ENCODE measurements at regions of chr7 and their contacts with region 1.

Region 1: GRCh38 chr7:77351539-77352004 is 64.6 kb downstream of the GSAP start:
- DNase-seq: peak; percentile 88
- H3K4me3 Mint-ChIP-seq: peak overlapping the region; percentile 76
- H3K27ac Mint-ChIP-seq: peak overlapping the region; percentile 94
- H3K4me1 Mint-ChIP-seq: peaks cover 54% of the 10 kb centered on the region
- H3K27me3 Mint-ChIP-seq: peaks cover 4% of the 10 kb centered on the region

Region 2: GRCh38 chr7:77315182-77315591 is 36.4 kb before region 1 on chr7:
- intact Hi-C with region 1: no loop called
- DNase-seq: no peak
- H3K4me3 Mint-ChIP-seq: no peak overlapping the region
- H3K27ac Mint-ChIP-seq: no peak overlapping the region
- H3K4me1 Mint-ChIP-seq: no peaks in the 10 kb centered on the region
- H3K27me3 Mint-ChIP-seq: no peaks in the 10 kb centered on the region

Region 3: DNA sequence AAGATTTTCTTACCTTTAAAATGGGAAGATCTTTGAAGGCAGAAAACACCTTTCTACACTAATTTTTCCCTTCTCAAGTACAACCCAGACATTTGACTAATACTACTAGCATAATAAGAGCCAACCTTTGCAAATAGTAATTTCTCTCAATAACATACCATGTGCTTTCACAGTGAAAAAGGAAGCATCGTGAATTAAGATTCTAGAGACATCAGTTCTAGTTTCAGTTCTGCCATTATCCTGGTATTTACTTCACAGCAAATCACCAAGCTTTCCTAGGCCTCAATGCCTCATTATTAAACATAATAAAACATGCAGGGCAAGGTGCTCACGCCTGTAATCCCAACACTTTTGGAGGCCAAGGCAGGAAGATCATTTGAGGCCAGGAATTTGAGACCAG is 39.7 kb after region 1 on chr7:
- intact Hi-C with region 1: no loop called
- DNase-seq: no peak
- H3K4me3 Mint-ChIP-seq: no peak overlapping the region
- H3K27ac Mint-ChIP-seq: no peak overlapping the region
- H3K4me1 Mint-ChIP-seq: peaks cover 24% of the 10 kb centered on the region
- H3K27me3 Mint-ChIP-seq: no peaks in the 10 kb centered on the region

Region 4: DNA sequence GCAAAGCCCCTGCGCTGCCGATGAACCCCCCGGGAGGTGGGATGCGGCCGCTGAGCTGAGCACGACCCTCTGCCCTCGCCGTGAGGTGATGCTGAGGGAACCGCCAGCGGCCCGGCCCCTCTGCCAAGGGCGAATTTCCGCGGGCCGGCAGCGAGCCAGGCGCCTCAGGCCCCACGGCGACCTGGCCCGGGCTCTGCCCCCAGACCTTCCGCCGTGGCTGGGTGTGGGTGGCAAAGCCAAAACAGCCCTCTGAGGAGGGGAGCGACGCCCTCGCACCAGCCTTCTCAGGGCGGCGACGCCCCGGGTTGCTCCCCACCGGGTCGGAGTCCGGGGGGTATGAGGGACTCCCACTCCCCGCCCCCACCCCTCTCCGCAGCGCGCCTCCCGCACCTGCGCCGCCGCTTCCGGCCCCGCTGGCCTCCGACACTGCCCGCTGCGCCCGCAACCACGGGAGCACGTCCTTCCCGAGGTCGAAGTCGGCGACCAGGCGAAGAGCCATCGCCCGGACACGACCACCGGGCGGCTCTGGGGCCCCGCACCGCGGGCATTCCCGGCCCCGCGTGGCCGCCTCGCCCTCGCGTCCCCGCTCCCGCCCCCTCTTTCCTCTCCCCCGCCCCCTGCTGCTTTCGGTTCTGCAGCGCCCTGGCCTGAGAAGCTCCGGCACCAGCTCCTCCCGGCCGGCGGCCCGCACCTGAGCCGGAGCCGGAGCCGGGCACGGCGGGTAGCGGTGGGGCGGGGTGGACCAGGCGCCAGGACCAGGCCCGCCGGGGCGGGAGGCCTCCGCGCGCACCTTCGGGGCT is 64.5 kb after region 1 on chr7 and contains the start of gene GSAP:
- intact Hi-C with region 1: loop called (anchors 5 kb)
- DNase-seq: peak; percentile 86
- H3K4me3 Mint-ChIP-seq: peak within 1 kb of the TSS; percentile 66
- H3K27ac Mint-ChIP-seq: peak within 1 kb of the TSS; percentile 36
- H3K4me1 Mint-ChIP-seq: peaks cover 23% of the 10 kb centered on the region
- H3K27me3 Mint-ChIP-seq: peaks cover 6% of the 10 kb centered on the region
- total RNA-seq, gene GSAP: 2.1 and 2.8 TPM in 2 replicates

Region 5: DNA sequence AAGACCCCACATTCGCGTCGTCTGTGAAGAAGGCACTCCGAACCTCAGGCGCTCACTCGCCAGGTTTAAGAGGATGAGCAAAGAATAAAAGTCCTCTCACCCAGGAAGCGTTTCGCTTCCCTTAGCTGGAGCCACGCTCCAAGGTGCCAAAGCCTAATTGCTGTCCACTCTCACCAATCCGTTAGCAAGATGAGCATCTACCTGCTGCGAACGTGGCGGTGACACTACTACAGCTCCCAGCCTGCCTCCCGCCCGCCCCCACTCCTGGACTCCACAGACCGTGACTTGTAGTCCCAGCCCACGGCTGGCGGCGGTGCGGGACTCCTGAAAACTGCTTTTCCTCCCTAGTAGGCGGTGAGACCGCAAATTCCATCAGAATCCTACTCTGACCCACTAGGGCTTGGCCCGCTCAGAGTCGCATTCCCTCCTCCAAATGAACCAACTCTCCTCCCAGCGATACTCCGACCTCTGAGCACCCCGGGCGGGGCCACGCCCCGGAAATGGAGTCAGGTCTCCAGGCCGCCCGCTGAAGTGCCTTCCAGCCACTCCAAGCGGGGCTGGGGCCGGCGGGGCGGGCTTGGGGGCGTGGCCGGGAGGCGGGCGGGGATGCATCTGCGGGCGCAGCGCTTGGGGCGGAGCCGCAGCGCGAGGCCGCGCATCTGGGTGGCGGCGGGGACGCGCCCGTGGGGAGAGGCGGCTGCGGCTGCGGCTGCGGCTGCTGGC is 185.0 kb after region 1 on chr7:
- intact Hi-C with region 1: loop called (anchors 2 kb)
- DNase-seq: peak; percentile 98
- H3K4me3 Mint-ChIP-seq: peak overlapping the region; percentile 98
- H3K27ac Mint-ChIP-seq: peak overlapping the region; percentile 94
- H3K4me1 Mint-ChIP-seq: peaks cover 12% of the 10 kb centered on the region
- H3K27me3 Mint-ChIP-seq: no peaks in the 10 kb centered on the region

Measured in activated CD4-positive, alpha-beta T cell treated with anti-CD3 and anti-CD28 coated beads, Interleukin-2, amount 10 ng/mL, durations not matched to agents 24 days and 14 days (primary cell).